Activated CD4-positive, alpha-beta T cell treated with anti-CD3 and anti-CD28 coated beads for 36 hours (primary cell): ENCODE measurements at regions of chr6 and their contacts with region 1.

Region 1: DNA sequence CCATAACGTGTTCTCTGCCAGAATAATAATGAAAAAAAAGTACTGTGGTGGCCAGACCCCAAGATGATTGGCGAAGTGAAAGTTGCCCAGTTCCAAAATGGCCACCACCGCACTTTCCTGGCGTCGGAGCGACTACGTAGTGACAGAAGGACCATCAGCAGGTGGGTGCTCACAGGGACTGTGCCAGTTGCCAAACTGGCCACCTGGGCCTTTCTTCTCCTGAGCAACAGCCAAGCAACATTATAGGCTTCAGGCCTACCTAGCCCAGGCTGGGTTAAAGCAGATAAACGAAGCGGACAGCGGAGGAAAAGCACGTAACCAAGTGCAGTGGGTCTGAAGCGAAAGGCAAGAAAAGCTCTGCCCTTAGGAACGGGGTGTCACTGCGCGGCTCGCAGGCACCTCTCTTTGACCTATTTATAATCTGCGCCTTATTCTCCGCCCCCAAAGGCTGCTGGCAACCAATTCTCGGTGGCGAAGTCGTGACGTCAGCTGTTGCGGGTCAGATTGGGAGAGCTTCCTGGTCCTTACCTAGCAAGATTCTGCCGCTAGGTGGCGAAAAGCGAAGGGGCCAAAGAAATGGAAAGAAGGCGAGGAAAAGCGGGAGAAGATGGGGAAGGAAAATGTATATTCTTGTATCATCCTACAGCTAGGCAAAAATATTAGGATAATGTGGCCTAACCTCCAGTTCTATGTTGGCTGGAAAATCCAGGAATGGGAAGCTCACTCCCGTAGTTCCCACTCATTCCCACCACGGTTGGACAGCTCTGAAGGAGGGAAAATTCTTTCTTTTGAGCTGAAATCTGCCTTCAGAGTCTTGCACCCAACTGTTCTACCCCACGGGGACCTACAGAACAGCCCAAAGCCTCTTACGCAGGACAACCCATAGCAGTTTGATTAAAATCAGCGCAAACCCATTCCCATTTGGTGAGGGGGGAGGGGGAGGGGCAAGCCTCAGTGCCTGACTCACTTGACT is 6.9 kb upstream of the MOG start:
- DNase-seq: peak; percentile 99
- ATAC-seq: peak; percentile 97
- H3K4me3 Mint-ChIP-seq: peak overlapping the region; percentile 80
- H3K27ac Mint-ChIP-seq: peak overlapping the region; percentile 97
- H3K4me1 Mint-ChIP-seq: peaks cover 10% of the 10 kb centered on the region
- H3K27me3 Mint-ChIP-seq: peaks cover 2% of the 10 kb centered on the region

Region 2: GRCh38 chr6:28981833-28982475 is 668.0 kb before region 1 on chr6:
- CTCF ChIA-PET with region 1: no interaction called
- POLR2A ChIA-PET with region 1: no interaction called
- intact Hi-C with region 1: no loop called
- DNase-seq: peak; percentile 82
- ATAC-seq: peak; percentile 42
- H3K4me3 Mint-ChIP-seq: peak overlapping the region; percentile 86
- H3K27ac Mint-ChIP-seq: peak overlapping the region; percentile 79
- H3K4me1 Mint-ChIP-seq: peaks cover 42% of the 10 kb centered on the region
- H3K27me3 Mint-ChIP-seq: peaks cover 47% of the 10 kb centered on the region

Region 3: GRCh38 chr6:29439006-29439405 is 211.0 kb before region 1 on chr6 and contains the start of gene OR10C1:
- CTCF ChIA-PET with region 1: no interaction called
- POLR2A ChIA-PET with region 1: no interaction called
- intact Hi-C with region 1: no loop called
- DNase-seq: no peak
- ATAC-seq: no peak
- H3K4me3 Mint-ChIP-seq: no peak within 1 kb of the TSS
- H3K27ac Mint-ChIP-seq: no peak within 1 kb of the TSS
- H3K4me1 Mint-ChIP-seq: no peaks in the 10 kb centered on the region
- H3K27me3 Mint-ChIP-seq: peaks cover 23% of the 10 kb centered on the region
- total RNA-seq, gene OR10C1: not detected

Region 4: DNA sequence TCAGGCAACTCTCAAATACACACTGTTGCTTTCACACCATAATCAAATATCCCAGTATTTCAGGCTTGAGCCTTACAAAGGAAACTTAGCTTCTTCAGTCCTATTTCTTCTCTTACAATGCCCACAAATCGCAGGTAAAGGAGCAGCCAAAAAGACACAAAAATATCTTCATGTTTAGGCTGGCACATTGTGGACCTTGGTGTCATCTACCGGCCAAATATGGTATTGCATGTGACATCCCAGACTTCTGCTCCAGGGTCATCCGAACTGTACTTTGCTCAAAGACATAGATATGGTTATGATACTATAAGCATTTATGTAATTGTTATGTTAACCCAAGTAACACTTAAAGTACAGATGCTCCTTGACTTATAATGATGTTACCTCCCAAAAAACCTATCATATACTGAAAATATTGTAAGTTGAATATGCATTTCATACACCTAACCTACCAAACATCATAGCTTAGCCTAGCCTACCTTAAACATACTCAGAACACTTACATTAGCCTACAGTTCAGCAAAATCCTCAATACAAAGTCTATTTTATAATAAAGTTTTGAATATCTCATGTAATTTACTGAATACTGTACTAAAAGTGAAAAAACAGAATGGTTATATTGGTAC is 60.5 kb before region 1 on chr6:
- CTCF ChIA-PET with region 1: interaction called, 10 read pairs
- POLR2A ChIA-PET with region 1: no interaction called
- intact Hi-C with region 1: no loop called
- DNase-seq: peak; percentile 69
- ATAC-seq: peak; percentile 71
- H3K4me3 Mint-ChIP-seq: no peak overlapping the region
- H3K27ac Mint-ChIP-seq: no peak overlapping the region
- H3K4me1 Mint-ChIP-seq: no peaks in the 10 kb centered on the region
- H3K27me3 Mint-ChIP-seq: peaks cover 2% of the 10 kb centered on the region

Region 5: GRCh38 chr6:29632789-29633533 is 17.0 kb before region 1 on chr6 and contains the start of gene GABBR1:
- CTCF ChIA-PET with region 1: interaction called, 84 read pairs
- POLR2A ChIA-PET with region 1: interaction called, 4 read pairs
- intact Hi-C with region 1: loop called (anchors 1 to 2 kb)
- DNase-seq: peak; percentile 85
- ATAC-seq: peak; percentile 84
- H3K4me3 Mint-ChIP-seq: peak within 1 kb of the TSS; percentile 75
- H3K27ac Mint-ChIP-seq: peak within 1 kb of the TSS; percentile 3
- H3K4me1 Mint-ChIP-seq: peaks cover 50% of the 10 kb centered on the region
- H3K27me3 Mint-ChIP-seq: no peaks in the 10 kb centered on the region
- total RNA-seq, gene GABBR1: 25.8 to 35.9 TPM

Region 6: DNA sequence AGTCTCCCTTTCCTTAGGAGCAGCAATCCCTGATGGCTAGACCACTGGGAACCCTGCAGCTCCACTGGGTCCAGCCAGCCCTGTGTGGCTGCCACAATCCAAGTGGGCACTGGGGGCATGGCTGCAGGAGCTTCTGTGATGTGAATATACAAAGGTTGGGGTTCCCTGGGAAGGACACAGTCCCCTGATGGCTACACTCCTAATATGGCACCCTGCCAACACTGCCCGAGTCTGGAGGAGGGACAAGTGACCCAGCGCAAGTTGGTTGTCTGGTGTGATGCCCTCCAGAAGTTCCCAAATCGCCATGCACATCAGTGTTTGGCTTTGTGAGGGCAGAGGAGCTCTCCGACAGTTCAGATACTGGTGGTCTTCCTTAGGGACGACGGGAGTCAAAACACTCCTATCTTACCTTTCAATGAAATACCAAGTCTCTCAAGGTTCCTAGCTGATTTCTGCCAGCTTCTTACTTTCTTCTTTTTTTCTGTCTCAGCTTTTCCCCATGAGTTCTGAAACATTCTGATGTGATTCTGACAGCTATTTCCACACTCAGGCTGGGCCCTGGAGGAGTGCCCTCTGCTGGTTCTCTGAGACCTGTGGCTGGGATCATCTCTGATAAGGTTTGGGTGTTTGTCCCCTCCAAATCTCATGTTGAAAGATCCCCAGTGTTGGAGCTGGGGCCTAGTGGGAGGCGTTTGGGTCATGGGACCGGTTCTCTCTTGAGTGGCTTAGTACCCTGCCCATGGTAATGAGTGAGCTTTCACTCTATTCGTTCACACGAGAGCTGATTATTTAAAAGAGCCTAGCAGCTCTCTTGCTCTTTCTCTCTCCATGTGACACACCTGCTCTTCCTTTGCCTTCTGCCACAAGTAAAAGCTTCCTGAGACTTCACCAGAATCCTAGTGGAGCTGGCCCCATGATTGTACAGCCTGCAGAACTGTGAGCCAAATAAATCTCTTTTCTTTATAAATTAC is 46.5 kb after region 1 on chr6:
- CTCF ChIA-PET with region 1: interaction called, 22 read pairs
- POLR2A ChIA-PET with region 1: no interaction called
- intact Hi-C with region 1: loop called in 1 of 2 experiments (anchors 2 kb)
- DNase-seq: peak; percentile 45
- ATAC-seq: no peak
- H3K4me3 Mint-ChIP-seq: no peak overlapping the region
- H3K27ac Mint-ChIP-seq: no peak overlapping the region
- H3K4me1 Mint-ChIP-seq: no peaks in the 10 kb centered on the region
- H3K27me3 Mint-ChIP-seq: no peaks in the 10 kb centered on the region

Region 7: DNA sequence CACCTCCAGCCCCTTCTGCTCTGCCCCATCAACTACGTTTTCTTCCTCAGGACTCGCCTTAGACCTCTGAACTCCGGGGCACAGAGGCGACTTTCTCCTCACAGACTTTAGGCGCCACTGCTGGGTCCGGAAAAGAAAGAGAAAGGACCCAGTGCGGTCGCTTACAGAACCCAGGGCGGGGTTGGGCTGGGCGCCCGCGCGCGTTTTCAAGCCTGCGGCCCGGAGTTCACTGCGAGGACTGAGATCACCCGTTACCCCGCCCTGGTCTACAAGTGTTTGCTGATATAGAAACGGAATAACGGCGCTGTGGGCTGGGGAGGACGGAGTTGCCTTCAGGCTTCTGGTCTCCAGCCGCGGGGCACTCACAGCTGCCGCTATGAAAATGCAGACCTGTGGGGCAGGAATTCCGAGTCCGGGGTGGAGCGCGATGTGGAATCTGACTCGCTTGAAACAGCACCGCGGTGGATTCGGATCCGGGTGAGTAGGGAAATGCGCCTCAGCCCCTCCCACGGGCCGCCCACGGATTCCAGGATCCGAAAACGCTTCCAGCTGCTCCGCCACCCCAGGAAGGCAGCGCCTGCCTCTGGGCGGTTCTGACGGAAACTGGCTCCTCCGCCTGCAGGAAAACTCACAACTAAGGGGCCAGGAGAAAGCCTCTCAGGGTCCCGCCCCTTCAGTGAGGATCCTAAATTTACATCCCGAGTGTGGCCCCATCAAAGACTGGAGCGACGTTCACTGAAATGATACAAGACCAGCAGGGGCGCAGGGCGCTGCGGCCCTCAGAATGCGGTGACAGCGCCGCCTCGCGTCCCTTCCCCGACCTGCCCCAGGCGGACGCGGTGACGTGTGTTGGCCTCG is 102.7 kb after region 1 on chr6:
- CTCF ChIA-PET with region 1: interaction called, 11 read pairs
- POLR2A ChIA-PET with region 1: no interaction called
- intact Hi-C with region 1: loop called in 1 of 2 experiments (anchors 2 kb)
- DNase-seq: peak; percentile 93
- ATAC-seq: peak; percentile 80
- H3K4me3 Mint-ChIP-seq: peak overlapping the region; percentile 83
- H3K27ac Mint-ChIP-seq: peak overlapping the region; percentile 89
- H3K4me1 Mint-ChIP-seq: peaks cover 23% of the 10 kb centered on the region
- H3K27me3 Mint-ChIP-seq: no peaks in the 10 kb centered on the region

Region 8: GRCh38 chr6:29942275-29943052 is 292.5 kb after region 1 on chr6 and contains the start of gene HLA-A:
- CTCF ChIA-PET with region 1: no interaction called
- POLR2A ChIA-PET with region 1: no interaction called
- intact Hi-C with region 1: loop called in 1 of 2 experiments (anchors 1 kb)
- DNase-seq: peak; percentile 96
- ATAC-seq: peak; percentile 91
- H3K4me3 Mint-ChIP-seq: peak within 1 kb of the TSS; percentile 88
- H3K27ac Mint-ChIP-seq: peak within 1 kb of the TSS; percentile 100
- H3K4me1 Mint-ChIP-seq: peaks cover 58% of the 10 kb centered on the region
- H3K27me3 Mint-ChIP-seq: no peaks in the 10 kb centered on the region
- total RNA-seq, gene HLA-A: 1,053 to 1,189 TPM